ENCODE measurements at regions of chr7 and their contacts with region 1.

Region 1: GRCh38 chr7:48154792-48155413 is 16.4 kb upstream of the ABCA13 start:
- DNase-seq: peak; percentile 59
- H3K4me3 Mint-ChIP-seq: no peak overlapping the region
- H3K27ac Mint-ChIP-seq: no peak overlapping the region
- H3K4me1 Mint-ChIP-seq: no peaks in the 10 kb centered on the region
- H3K27me3 Mint-ChIP-seq: peaks cover 47% of the 10 kb centered on the region
- CTCF ChIP-seq: peak; percentile 79

Region 2: DNA sequence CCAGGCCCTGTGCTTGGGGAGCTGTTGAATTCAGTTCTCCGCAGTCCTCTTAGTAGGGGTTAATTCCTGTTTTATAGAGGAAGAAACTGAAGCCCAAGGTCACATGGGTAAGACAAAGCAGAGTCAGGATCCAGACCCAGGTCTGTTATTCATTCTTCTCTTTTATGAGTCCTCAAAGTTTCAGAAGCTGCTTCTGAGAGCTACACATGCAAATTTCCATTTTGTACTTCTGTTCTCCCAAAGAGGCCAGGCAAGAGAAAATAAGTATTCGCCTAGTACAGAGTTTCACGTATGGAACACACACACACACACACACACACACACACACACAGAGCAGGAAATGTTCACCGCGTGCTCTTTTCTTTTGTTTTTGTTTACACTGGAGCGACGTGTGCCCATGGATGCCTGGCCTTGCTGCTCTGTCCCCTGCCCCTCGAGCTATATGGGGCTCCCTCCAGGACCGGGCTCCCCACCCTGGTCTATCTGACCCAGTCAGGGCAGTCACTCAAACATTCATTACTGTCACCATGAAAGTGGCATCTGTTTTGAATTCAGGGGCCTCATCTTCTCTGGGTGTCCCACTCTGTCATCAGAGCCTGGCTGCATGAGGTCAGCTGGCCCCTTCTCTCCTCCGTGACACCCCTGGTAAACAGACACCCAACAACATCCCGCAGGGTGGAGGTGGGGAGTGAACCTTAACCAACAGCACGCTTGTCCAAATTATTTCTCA is 657.4 kb before region 1 on chr7:
- CTCF ChIA-PET with region 1: no interaction called
- POLR2A ChIA-PET with region 1: no interaction called
- intact Hi-C with region 1: no loop called
- DNase-seq: no peak
- H3K4me3 Mint-ChIP-seq: no peak overlapping the region
- H3K27ac Mint-ChIP-seq: no peak overlapping the region
- H3K4me1 Mint-ChIP-seq: peaks cover 28% of the 10 kb centered on the region
- H3K27me3 Mint-ChIP-seq: no peaks in the 10 kb centered on the region
- CTCF ChIP-seq: no peak

Region 3: GRCh38 chr7:47937065-47937683 is 217.7 kb before region 1 on chr7:
- CTCF ChIA-PET with region 1: interaction called, 13 read pairs
- POLR2A ChIA-PET with region 1: no interaction called
- intact Hi-C with region 1: no loop called
- DNase-seq: no peak
- H3K4me3 Mint-ChIP-seq: no peak overlapping the region
- H3K27ac Mint-ChIP-seq: no peak overlapping the region
- H3K4me1 Mint-ChIP-seq: peaks cover 10% of the 10 kb centered on the region
- H3K27me3 Mint-ChIP-seq: no peaks in the 10 kb centered on the region
- CTCF ChIP-seq: no peak

Region 4: DNA sequence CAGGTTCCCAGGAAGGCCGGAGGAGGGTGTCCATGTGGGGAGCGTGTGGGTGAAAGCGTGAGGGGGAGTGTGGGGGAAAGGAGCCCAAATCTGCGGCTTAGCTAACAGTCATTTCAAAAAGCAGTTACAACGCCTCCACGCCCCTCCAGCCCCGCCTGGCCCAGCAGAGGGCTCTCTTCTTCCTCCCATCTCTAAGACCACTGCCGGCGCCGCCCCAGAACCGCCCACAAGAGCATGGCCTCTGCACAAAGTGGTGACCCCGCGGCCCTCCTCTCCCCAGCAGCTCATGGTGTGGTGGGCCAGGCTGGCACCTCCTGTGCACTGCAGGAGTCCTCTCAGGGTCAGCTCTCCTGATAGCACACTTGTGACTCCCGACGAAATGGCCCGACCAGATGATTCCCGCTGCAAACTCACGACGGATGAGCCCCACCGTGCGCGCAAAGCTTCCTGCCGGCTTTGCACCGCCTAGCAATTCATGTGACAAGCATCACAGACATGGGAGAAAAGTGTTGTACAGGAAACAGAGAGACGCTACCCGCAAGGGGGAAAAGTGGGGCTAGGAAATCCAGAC is 163.1 kb before region 1 on chr7:
- CTCF ChIA-PET with region 1: interaction called, 6 read pairs
- POLR2A ChIA-PET with region 1: no interaction called
- intact Hi-C with region 1: loop called (anchors 1 kb)
- DNase-seq: peak; percentile 66
- H3K4me3 Mint-ChIP-seq: no peak overlapping the region
- H3K27ac Mint-ChIP-seq: no peak overlapping the region
- H3K4me1 Mint-ChIP-seq: no peaks in the 10 kb centered on the region
- H3K27me3 Mint-ChIP-seq: no peaks in the 10 kb centered on the region
- CTCF ChIP-seq: peak; percentile 48

Region 5: GRCh38 chr7:48006866-48007265 is 148.0 kb before region 1 on chr7:
- CTCF ChIA-PET with region 1: no interaction called
- POLR2A ChIA-PET with region 1: no interaction called
- intact Hi-C with region 1: no loop called
- DNase-seq: no peak
- H3K4me3 Mint-ChIP-seq: no peak overlapping the region
- H3K27ac Mint-ChIP-seq: no peak overlapping the region
- H3K4me1 Mint-ChIP-seq: no peaks in the 10 kb centered on the region
- H3K27me3 Mint-ChIP-seq: no peaks in the 10 kb centered on the region
- CTCF ChIP-seq: no peak

Region 6: DNA sequence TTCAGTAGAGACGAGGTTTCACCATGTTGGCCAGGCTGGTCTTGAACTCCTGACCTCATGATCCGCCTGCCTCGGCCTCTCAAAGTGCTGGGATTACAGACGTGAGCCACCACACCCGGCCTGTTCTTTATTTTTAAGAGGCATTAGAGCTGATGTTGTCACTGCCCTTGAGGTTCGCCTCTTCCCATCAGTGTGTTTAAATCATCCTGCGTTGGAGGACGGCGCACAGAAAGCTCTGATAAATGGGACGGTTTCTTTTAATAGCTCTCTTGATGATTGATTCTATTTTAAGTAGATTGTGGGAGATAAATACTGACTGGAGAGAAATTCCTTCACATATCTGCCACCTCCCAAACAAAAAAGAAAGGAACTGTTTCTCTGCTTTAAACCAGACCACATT is 36.9 kb before region 1 on chr7:
- CTCF ChIA-PET with region 1: interaction called, 10 read pairs
- POLR2A ChIA-PET with region 1: no interaction called
- intact Hi-C with region 1: no loop called
- DNase-seq: no peak
- H3K4me3 Mint-ChIP-seq: no peak overlapping the region
- H3K27ac Mint-ChIP-seq: no peak overlapping the region
- H3K4me1 Mint-ChIP-seq: peaks cover 13% of the 10 kb centered on the region
- H3K27me3 Mint-ChIP-seq: peaks cover 8% of the 10 kb centered on the region
- CTCF ChIP-seq: no peak

Region 7: GRCh38 chr7:48132792-48133191 is 22.1 kb before region 1 on chr7:
- CTCF ChIA-PET with region 1: interaction called, 11 read pairs
- POLR2A ChIA-PET with region 1: interaction called, 3 read pairs
- intact Hi-C with region 1: no loop called
- DNase-seq: no peak
- H3K4me3 Mint-ChIP-seq: no peak overlapping the region
- H3K27ac Mint-ChIP-seq: no peak overlapping the region
- H3K4me1 Mint-ChIP-seq: no peaks in the 10 kb centered on the region
- H3K27me3 Mint-ChIP-seq: peaks cover 17% of the 10 kb centered on the region
- CTCF ChIP-seq: no peak

Region 8: GRCh38 chr7:48139459-48139858 is 15.4 kb before region 1 on chr7:
- CTCF ChIA-PET with region 1: interaction called, 54 read pairs
- POLR2A ChIA-PET with region 1: interaction called, 5 read pairs
- intact Hi-C with region 1: no loop called
- DNase-seq: peak; percentile 24
- H3K4me3 Mint-ChIP-seq: no peak overlapping the region
- H3K27ac Mint-ChIP-seq: no peak overlapping the region
- H3K4me1 Mint-ChIP-seq: no peaks in the 10 kb centered on the region
- H3K27me3 Mint-ChIP-seq: peaks cover 14% of the 10 kb centered on the region
- CTCF ChIP-seq: peak; percentile 25

Region 9: DNA sequence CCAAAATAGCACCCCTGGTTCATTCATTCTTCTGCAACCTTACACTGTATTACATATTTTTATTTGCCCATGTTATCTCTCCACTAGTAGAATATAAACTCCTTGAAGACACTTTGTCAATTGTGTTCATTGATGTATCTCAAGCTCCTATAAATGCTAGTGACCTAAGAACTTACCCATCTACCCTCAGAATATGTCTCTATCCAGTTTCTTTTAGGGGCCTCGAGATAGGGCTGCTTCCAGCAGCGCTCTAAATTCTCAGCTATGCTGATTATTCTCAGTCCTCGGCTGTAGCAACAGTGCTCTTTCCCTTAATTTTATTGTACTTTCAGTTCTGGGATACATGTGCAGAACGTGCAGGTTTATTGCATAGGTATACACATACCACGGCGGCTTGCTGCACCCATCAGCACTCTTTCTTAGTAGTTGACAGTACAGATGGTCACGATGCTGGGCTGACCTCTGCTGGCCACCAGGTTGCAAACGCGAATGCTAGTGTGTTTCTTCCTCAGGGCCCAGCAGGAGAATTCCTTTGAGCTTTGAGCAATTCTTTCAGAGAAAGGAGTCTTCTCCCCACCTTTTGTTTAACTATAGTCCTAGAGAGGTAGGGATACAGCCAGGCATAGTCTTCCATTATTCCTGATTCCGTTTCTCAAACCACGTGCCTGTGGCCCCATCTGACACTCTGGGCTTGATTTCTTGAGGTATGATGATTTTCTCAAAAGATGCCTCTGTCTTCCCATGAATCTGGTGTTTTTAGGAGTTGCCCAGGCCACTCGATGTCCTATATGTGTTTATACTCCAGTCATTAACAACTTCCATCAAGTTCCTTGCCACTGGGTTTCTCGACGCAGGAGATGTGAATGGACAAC is 720.4 kb after region 1 on chr7:
- CTCF ChIA-PET with region 1: no interaction called
- POLR2A ChIA-PET with region 1: no interaction called
- intact Hi-C with region 1: loop called (anchors 10 kb)
- DNase-seq: peak; percentile 43
- H3K4me3 Mint-ChIP-seq: no peak overlapping the region
- H3K27ac Mint-ChIP-seq: no peak overlapping the region
- H3K4me1 Mint-ChIP-seq: no peaks in the 10 kb centered on the region
- H3K27me3 Mint-ChIP-seq: peaks cover 49% of the 10 kb centered on the region
- CTCF ChIP-seq: peak; percentile 79